ENCODE measurements at regions of chr1 and their contacts with region 1.

Region 1: GRCh38 chr1:202968840-202969295 is 1.8 kb upstream of the CYB5R1 start:
- DNase-seq: peak; percentile 62
- H3K4me3 ChIP-seq: no peak overlapping the region
- H3K27ac ChIP-seq: no peak overlapping the region
- H3K4me1 ChIP-seq: peaks cover 19% of the 10 kb centered on the region
- H3K27me3 ChIP-seq: peaks cover 0 to 9% of the 10 kb centered on the region in 2 experiments
- CTCF ChIP-seq: peak; percentile 68 to 73
- POLR2A ChIP-seq: no peak

Region 2: GRCh38 chr1:202348509-202349205 is 620.2 kb before region 1 on chr1 and contains the start of gene PPP1R12B:
- CTCF ChIA-PET with region 1: no interaction called
- POLR2A ChIA-PET with region 1: no interaction called
- dilution Hi-C with region 1: no loop called
- intact Hi-C with region 1: loop called (anchors 10 kb)
- DNase-seq: peak; percentile 99
- H3K4me3 ChIP-seq: peak within 1 kb of the TSS; percentile 44 to 75 (median 55)
- H3K27ac ChIP-seq: peak within 1 kb of the TSS; percentile 52
- H3K4me1 ChIP-seq: peaks cover 7% of the 10 kb centered on the region
- H3K27me3 ChIP-seq: no peaks in the 10 kb centered on the region
- CTCF ChIP-seq: no peak
- POLR2A ChIP-seq: peak; percentile 71
- total RNA-seq, gene PPP1R12B: 11.5 and 11.6 TPM in 2 replicates

Region 3: DNA sequence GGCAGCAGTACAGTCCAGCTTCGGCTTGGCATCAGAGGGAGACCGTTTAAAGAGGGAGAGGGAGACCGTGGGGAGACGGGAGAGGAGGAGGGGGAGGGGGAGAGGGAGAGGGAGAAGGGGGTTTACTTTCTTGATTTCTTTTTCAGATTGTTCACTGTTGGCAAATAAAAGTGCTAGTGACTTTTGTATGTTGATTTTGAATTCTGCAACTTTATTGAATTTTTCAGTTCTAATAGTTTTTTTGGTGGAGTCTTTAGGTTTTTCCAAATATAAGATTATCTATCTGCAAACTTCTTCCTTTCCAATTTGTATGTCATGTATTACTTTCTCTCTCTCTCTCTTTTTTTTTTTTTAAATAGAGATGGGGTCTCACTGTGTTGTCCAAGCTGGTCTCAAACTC is 516.4 kb before region 1 on chr1:
- CTCF ChIA-PET with region 1: no interaction called
- POLR2A ChIA-PET with region 1: no interaction called
- dilution Hi-C with region 1: no loop called
- intact Hi-C with region 1: no loop called
- DNase-seq: no peak
- H3K4me3 ChIP-seq: no peak overlapping the region
- H3K27ac ChIP-seq: no peak overlapping the region
- H3K4me1 ChIP-seq: peaks cover 6% of the 10 kb centered on the region
- H3K27me3 ChIP-seq: no peaks in the 10 kb centered on the region
- CTCF ChIP-seq: no peak
- POLR2A ChIP-seq: no peak

Region 4: GRCh38 chr1:202952818-202953217 is 16.1 kb before region 1 on chr1:
- CTCF ChIA-PET with region 1: interaction called, 10 read pairs
- POLR2A ChIA-PET with region 1: no interaction called
- dilution Hi-C with region 1: no loop called
- intact Hi-C with region 1: loop called (anchors 1 kb)
- DNase-seq: peak; percentile 78
- H3K4me3 ChIP-seq: no peak overlapping the region
- H3K27ac ChIP-seq: peak overlapping the region; percentile 37
- H3K4me1 ChIP-seq: peaks cover 25% of the 10 kb centered on the region
- H3K27me3 ChIP-seq: no peaks in the 10 kb centered on the region
- CTCF ChIP-seq: no peak
- POLR2A ChIP-seq: no peak

Region 5: DNA sequence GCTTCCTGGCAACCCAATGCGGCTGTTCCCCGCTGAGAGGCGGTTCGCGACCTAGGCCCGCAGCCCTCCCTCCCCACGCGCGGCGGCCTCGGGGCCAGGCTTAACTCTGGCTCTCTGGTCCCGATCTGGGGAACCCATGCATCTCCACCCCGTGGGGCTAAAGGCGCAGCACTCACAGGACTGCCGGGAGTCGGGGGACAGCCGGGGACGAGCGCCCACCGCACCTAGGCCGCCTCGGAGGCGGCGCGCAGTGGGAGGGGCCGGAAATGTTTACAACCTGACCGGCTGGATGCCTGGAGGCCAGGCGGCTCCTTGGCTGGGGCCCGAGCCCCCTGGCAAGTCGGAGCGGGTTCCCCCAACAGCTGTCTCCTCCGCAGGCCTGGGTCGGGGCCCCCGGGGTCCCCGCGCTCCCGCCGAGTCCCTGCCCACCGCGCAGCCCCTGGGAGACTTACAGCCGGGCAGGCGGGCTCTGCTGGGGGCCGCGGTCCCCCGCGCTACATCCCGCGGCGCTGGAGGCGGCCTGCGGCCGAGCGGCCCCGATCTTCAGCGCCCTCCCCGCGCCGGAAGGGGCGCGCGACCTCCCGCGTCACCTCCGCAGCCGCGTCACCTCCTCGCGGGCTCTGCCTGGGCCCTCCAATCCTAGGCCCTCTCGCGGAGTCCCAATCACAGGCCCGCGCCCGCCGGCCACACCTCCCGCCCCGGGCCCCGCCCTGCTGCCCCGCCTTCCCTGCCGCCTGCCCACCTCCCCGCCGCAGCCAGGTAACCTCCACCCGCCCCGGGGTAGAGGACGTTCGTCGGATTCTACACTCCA is 10.9 kb before region 1 on chr1 and contains the start of gene ADIPOR1:
- CTCF ChIA-PET with region 1: interaction called, 10 read pairs
- POLR2A ChIA-PET with region 1: no interaction called
- dilution Hi-C with region 1: no loop called
- intact Hi-C with region 1: loop called (anchors 1 kb)
- DNase-seq: peak; percentile 85
- H3K4me3 ChIP-seq: peak within 1 kb of the TSS; percentile 79 to 99 (median 81)
- H3K27ac ChIP-seq: peak within 1 kb of the TSS; percentile 86
- H3K4me1 ChIP-seq: peaks cover 22% of the 10 kb centered on the region
- H3K27me3 ChIP-seq: no peaks in the 10 kb centered on the region
- CTCF ChIP-seq: no peak
- POLR2A ChIP-seq: peak; percentile 87
- total RNA-seq, gene ADIPOR1: 66.9 and 67.2 TPM in 2 replicates

Region 6: GRCh38 chr1:203006948-203007871 is 38.3 kb after region 1 on chr1 and contains the start of gene TMEM183A:
- CTCF ChIA-PET with region 1: interaction called, 7 read pairs
- POLR2A ChIA-PET with region 1: interaction called, 3 read pairs
- dilution Hi-C with region 1: no loop called
- intact Hi-C with region 1: loop called (anchors 2 kb)
- DNase-seq: peak; percentile 96
- H3K4me3 ChIP-seq: peak within 1 kb of the TSS; percentile 53 to 92 (median 89)
- H3K27ac ChIP-seq: peak within 1 kb of the TSS; percentile 56
- H3K4me1 ChIP-seq: peaks cover 11% of the 10 kb centered on the region
- H3K27me3 ChIP-seq: no peaks in the 10 kb centered on the region
- CTCF ChIP-seq: no peak
- POLR2A ChIP-seq: peak; percentile 94
- total RNA-seq, gene TMEM183A: 59.4 and 65.5 TPM in 2 replicates